Dendritic cell treated with granulocyte-macrophage colony-stimulating factor and Interleukin-4, amounts not matched to agents 40 ng/mL and 50 ng/mL, for 4 days (primary cell): ENCODE measurements at regions of chr5 and their contacts with region 1.

Region 1: GRCh38 chr5:75681125-75681830 is 36.0 kb downstream of the POC5 start:
- H3K4me3 Mint-ChIP-seq: no peak overlapping the region
- H3K27ac Mint-ChIP-seq: no peak overlapping the region
- H3K4me1 Mint-ChIP-seq: peaks cover 9% of the 10 kb centered on the region
- H3K27me3 Mint-ChIP-seq: no peaks in the 10 kb centered on the region

Region 2: DNA sequence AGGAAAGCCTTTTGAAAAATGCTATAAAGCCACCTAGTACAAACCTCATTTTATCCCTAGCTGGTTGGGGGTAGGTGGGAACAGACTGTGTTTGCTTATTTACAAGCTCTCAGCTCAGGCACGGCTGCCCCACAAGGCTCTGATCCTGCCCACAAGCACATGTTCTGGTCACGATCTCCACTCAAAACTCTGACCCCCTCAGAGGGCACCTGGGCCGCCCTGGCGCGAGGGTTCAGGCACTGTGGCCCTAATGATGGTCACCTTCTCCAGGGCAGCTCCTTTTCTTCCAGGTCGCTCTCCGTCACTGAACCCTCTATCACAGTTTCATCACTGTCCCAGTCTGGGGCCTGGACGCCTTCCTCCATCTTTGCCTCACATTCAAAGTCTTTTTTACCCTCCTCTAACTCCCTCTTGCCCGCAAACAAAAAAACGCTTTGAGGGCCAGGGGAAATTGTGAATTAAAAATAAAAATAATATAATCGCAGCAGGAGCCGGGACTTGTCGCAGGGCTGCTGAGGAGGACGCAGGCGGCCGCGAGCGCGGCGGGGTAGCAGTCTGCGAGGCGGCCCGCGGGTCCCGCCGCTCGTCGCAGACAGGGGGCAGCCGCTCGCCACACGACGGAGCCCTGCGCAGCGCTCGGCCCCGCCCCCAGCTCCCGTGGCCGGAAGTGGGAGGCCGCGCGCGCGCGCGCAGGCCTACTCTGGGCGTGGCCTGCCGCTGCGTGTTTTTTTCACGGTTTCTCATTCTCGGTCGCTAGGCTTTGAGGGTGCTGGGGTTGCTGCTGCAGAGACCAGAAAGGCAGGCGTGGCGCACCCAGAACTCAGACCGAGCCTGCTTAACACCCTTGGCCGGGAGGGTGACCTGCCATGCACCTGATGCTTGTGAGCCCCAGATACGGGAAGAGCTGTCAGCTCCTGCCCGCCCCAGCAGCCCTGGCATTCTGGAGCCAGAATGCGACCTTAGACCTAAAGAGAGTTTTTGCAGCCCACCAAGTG is 444.7 kb before region 1 on chr5 and contains the start of gene ANKRD31:
- intact Hi-C with region 1: loop called (anchors 5 kb)
- H3K4me3 Mint-ChIP-seq: peak within 1 kb of the TSS; percentile 90
- H3K27ac Mint-ChIP-seq: peak within 1 kb of the TSS; percentile 75
- H3K4me1 Mint-ChIP-seq: peaks cover 5% of the 10 kb centered on the region
- H3K27me3 Mint-ChIP-seq: peaks cover 5% of the 10 kb centered on the region

Region 3: GRCh38 chr5:75395277-75395676 is 286.0 kb before region 1 on chr5:
- intact Hi-C with region 1: loop called (anchors 10 kb)
- H3K4me3 Mint-ChIP-seq: no peak overlapping the region
- H3K27ac Mint-ChIP-seq: no peak overlapping the region
- H3K4me1 Mint-ChIP-seq: no peaks in the 10 kb centered on the region
- H3K27me3 Mint-ChIP-seq: no peaks in the 10 kb centered on the region

Region 4: GRCh38 chr5:75584641-75585040 is 96.6 kb before region 1 on chr5:
- intact Hi-C with region 1: loop called (anchors 5 kb)
- H3K4me3 Mint-ChIP-seq: no peak overlapping the region
- H3K27ac Mint-ChIP-seq: no peak overlapping the region
- H3K4me1 Mint-ChIP-seq: no peaks in the 10 kb centered on the region
- H3K27me3 Mint-ChIP-seq: no peaks in the 10 kb centered on the region

Region 5: DNA sequence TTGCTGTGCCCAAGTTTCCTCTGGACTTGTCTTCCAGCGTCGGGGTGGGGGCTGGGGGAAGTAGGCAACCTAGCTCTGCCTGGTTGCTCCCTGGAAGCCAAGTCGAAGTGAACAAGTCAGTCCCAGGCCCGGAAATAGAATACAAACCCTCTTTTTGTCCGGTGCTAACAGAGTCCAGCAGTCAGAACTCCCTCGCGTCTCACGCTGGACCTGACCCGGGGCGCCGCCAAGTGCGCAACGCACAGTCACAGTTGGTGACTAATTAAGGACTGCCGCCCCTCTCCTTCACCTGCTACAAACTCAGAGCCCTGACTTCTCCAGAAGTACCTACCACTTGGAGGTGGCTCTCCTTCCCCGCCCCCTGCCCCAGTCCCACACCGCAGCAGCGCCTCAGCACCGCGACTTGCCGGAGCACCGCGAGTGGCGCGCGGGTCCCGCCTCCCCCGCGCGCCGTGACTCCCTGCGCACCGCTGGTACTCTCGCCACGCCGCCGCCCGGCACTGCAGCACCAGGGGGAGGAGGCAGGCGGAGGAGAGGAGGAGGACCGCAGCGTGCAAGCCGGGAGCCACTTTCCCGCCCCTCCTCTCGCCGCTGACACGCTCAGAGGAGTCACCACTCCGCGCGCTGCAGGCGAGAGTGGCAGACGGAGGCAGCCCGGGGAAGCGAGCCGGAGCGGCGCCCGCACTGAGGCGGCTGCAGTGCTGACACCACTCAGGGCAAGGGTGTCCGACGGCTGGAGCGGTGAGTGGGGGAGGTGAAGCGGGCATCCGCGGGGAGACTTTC is 401.7 kb after region 1 on chr5 and contains the start of gene SV2C:
- intact Hi-C with region 1: no loop called
- H3K4me3 Mint-ChIP-seq: peak within 1 kb of the TSS; percentile 54
- H3K27ac Mint-ChIP-seq: no peak within 1 kb of the TSS
- H3K4me1 Mint-ChIP-seq: peaks cover 33% of the 10 kb centered on the region
- H3K27me3 Mint-ChIP-seq: peaks cover 85% of the 10 kb centered on the region